Heart right ventricle (tissue), 16 donors: ENCODE measurements at regions of chr15 and their contacts with region 1.

Region 1: GRCh38 chr15:50735156-50735555 is 30.4 kb downstream of the SPPL2A start:
- DNase-seq: no peak
- ATAC-seq: no peak
- H3K4me3 ChIP-seq: no peak overlapping the region
- H3K27ac ChIP-seq: no peak overlapping the region
- H3K4me1 ChIP-seq: no peaks in the 10 kb centered on the region
- H3K27me3 ChIP-seq: no peaks in the 10 kb centered on the region
- CTCF ChIP-seq: no peak

Region 2: DNA sequence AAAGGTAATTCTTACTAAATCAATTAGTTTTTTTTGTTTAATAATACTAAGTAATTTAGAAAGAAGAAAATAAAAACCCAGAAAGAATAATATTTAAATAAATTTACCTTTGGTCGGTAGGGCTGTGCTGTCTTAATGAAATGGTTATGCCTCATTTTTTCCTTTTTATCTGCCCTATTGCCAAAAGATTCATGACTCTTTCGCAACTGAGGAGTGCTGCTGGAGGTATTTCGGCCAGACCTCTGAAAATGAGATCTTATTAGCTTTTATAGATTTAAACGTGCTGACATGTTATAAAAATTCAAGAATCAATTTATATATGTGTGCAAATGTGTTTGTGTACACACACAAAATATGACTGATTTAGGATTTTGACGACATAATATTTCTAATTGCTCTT is 121.6 kb before region 1 on chr15:
- intact Hi-C with region 1: no loop called
- DNase-seq: no peak
- ATAC-seq: no peak
- H3K4me3 ChIP-seq: no peak overlapping the region
- H3K27ac ChIP-seq: no peak overlapping the region
- H3K4me1 ChIP-seq: no peaks in the 10 kb centered on the region
- H3K27me3 ChIP-seq: no peaks in the 10 kb centered on the region
- CTCF ChIP-seq: no peak

Region 3: DNA sequence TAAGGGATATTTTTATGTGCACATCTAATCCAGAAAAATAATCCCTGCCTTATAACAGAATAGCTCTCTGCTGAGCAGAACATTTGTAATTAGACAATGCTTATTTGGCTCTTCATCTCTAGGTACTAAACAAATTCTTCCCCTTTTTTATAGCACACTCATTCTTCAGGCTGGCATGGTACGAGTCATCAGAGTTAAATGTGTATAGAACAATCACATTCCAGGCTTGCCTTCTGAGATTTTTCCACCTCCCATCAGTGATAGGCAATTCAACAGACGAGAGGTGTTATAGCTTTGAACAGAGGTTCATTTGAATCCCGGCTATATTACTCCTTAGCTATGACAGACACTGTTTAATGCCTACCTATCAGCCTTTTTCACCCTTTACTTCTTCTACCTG is 51.7 kb after region 1 on chr15:
- intact Hi-C with region 1: loop called in 1 of 10 experiments (anchors 5 kb)
- DNase-seq: no peak
- ATAC-seq: no peak
- H3K4me3 ChIP-seq: no peak overlapping the region
- H3K27ac ChIP-seq: peak overlapping the region in 2 of 10 donors; percentile 1 to 52
- H3K4me1 ChIP-seq: peaks cover 0 to 13% (median 0%) of the 10 kb centered on the region in 9 donors
- H3K27me3 ChIP-seq: no peaks in the 10 kb centered on the region
- CTCF ChIP-seq: no peak

Region 4: GRCh38 chr15:50798684-50799083 is 63.5 kb after region 1 on chr15:
- intact Hi-C with region 1: no loop called
- DNase-seq: no peak
- ATAC-seq: no peak
- H3K4me3 ChIP-seq: no peak overlapping the region
- H3K27ac ChIP-seq: no peak overlapping the region
- H3K4me1 ChIP-seq: no peaks in the 10 kb centered on the region
- H3K27me3 ChIP-seq: no peaks in the 10 kb centered on the region
- CTCF ChIP-seq: no peak